Psoas muscle (tissue), 8 donors: ENCODE measurements at regions of chr3 and their contacts with region 1.

Region 1: DNA sequence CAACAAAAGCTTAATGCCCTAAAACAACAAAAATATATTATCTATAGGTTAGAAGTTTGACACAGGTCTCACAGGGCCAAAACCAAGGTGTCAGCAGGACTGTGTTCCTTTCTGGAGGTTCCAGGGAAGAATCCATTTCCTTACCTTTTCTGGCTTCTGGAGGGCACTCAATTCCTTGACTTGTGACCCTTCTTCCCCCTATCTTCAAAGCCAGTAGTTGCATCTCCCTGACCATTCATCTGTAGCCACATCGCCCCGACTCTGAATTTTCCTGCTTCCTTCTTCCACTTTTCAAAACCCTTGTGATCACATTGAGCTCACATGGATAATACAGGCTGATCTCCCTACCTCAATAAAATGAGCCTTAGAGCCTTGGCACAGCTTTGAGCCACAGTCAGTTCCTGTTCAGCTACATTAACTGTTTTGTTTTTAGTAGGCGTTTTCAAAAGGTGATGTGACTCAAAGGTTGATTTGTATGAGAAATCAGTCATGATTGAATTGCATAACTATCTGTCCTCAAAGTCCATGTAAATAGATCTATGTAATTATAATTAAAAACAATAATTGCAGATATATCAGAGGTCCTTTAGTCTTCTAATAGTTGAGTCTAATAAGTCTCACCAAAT is 12.4 kb downstream of the PFN2 start:
- DNase-seq: no peak
- ATAC-seq: peak in 2 of 4 donors; percentile 26 to 27
- H3K4me3 ChIP-seq: no peak overlapping the region
- H3K27ac ChIP-seq: peak overlapping the region; percentile 39
- H3K4me1 ChIP-seq: peaks cover 25% of the 10 kb centered on the region
- H3K27me3 ChIP-seq: no peaks in the 10 kb centered on the region
- CTCF ChIP-seq: no peak

Region 2: GRCh38 chr3:149879872-149880271 is 78.4 kb before region 1 on chr3:
- intact Hi-C with region 1: loop called in 1 of 2 experiments (anchors 5 kb)
- DNase-seq: peak; percentile 61 to 68
- ATAC-seq: peak; percentile 74 to 91 (median 83)
- H3K4me3 ChIP-seq: no peak overlapping the region
- H3K27ac ChIP-seq: no peak overlapping the region
- H3K4me1 ChIP-seq: peaks cover 15% of the 10 kb centered on the region
- H3K27me3 ChIP-seq: no peaks in the 10 kb centered on the region
- CTCF ChIP-seq: peak; percentile 61

Region 3: GRCh38 chr3:150035301-150035779 is 77.1 kb after region 1 on chr3:
- intact Hi-C with region 1: no loop called
- DNase-seq: peak in 1 of 2 donors; percentile 63
- ATAC-seq: peak; percentile 74 to 85 (median 78)
- H3K4me3 ChIP-seq: peak overlapping the region; percentile 23
- H3K27ac ChIP-seq: peak overlapping the region; percentile 87
- H3K4me1 ChIP-seq: peaks cover 14% of the 10 kb centered on the region
- H3K27me3 ChIP-seq: no peaks in the 10 kb centered on the region
- CTCF ChIP-seq: no peak